ENCODE measurements at regions of chr2 and their contacts with region 1.

Region 1: DNA sequence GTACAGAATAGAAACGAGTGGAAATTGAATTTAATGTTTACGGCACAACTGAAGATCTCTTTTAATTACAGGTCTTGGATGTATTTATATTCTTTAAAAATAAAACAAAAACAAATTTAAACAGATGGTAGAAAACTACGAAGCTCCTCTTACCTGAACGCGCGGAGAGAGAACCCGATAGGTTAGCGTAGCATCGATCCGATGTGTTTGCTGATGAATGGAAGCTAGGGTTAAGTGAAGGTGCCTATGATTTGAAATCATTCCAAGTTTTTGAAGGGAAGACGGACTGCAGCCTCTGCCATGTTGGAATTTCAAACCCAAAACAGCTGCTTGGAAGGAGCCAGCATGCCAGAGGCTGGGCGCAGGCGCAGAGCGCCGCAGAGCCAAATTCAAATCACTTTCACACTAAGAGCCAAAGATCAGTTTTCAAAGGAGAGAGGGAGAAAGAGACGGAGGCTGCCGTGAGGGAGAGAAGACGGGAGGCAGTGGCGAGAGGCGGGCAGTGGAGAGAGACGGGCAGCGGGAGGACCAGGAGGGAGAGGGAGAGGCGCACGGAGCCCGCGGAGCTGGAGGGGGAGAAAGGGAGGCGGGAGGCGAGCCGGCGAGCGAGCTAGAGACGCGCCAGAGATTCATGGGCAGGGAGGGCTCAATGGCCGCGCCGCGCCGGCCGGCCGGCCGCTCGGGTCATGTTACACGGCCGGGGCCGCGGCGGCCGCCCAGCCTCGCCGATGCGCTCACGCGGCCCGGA is at the start of gene FIGN:
- DNase-seq: peak; percentile 77
- ATAC-seq: peak; percentile 83 to 95 (median 87)
- H3K4me3 ChIP-seq: peak within 1 kb of the TSS; percentile 46 to 74 (median 72)
- H3K27ac ChIP-seq: peak within 1 kb of the TSS; percentile 81 to 96 (median 94)
- H3K4me1 ChIP-seq: peaks cover 0 to 10% (median 0%) of the 10 kb centered on the region in 9 donors
- H3K27me3 ChIP-seq: peaks cover 0 to 30% (median 0%) of the 10 kb centered on the region in 7 donors
- CTCF ChIP-seq: no peak
- total RNA-seq, gene FIGN: 10.0 to 17.0 (median 12.2) TPM

Region 2: DNA sequence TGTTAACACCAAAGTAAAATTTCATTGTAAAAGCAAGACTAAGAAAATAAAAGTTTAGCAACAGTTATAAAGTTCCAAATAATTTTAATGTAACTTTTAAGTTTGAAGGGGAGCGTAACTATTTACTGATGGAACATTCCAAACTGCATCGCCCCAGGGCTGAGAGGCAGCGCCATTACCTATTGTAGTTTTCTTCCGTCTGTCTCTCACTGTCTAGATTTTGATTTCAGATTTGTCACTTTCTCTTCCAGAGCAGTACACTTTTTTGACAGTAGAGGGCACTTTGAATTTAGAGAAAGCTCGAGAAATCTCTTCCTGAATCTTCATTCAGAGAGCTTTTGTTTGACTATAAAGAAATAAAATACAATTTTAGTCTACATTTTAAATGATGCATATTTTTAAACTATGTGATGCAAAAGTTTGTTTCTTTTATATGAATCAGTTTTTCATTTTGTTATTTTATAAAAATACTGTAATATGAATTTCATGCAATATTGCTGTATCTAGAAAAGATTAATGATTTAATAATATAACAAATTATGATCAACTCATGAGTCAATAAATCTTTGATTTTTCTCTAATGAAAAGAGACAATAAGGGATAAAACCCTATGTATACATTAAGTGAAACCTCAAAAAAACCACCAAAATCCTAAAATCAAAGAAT is 389.8 kb before region 1 on chr2:
- intact Hi-C with region 1: loop called in 6 of 10 experiments (anchors 2 to 10 kb)
- DNase-seq: peak in 1 of 2 donors; percentile 5
- ATAC-seq: no peak
- H3K4me3 ChIP-seq: no peak overlapping the region
- H3K27ac ChIP-seq: no peak overlapping the region
- H3K4me1 ChIP-seq: peaks cover 0 to 26% (median 9%) of the 10 kb centered on the region in 9 donors
- H3K27me3 ChIP-seq: no peaks in the 10 kb centered on the region
- CTCF ChIP-seq: peak; percentile 58 to 87 (median 81)

Region 3: GRCh38 chr2:163471947-163472346 is 263.9 kb before region 1 on chr2:
- intact Hi-C with region 1: loop called in 6 of 10 experiments (anchors 5 to 10 kb)
- DNase-seq: peak in 1 of 2 donors; percentile 13
- ATAC-seq: peak in 6 of 8 donors; percentile 44 to 75 (median 64)
- H3K4me3 ChIP-seq: no peak overlapping the region
- H3K27ac ChIP-seq: no peak overlapping the region
- H3K4me1 ChIP-seq: peaks cover 0 to 10% (median 0%) of the 10 kb centered on the region in 9 donors
- H3K27me3 ChIP-seq: no peaks in the 10 kb centered on the region
- CTCF ChIP-seq: peak in 8 of 9 donors; percentile 16 to 61 (median 46)

Region 4: DNA sequence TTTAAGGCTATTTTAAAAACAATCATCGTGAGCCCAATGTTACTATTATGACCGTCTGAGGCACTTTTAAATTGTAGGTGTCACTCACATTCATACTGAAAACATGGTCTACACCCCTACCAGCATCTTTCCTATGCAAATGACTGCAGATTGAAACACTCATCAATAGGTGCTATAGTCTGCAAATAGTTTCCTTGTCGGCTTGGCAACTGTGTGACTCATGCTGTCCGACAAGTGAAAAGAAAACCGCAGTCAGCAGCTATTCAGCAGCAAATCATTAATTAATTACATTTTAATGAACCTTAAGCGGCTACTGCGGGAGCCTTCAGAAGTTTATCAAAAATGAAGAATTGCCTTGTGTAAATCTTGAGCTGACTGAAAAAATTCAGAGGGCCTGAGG is 134.5 kb before region 1 on chr2:
- intact Hi-C with region 1: loop called in 1 of 10 experiments (anchors 5 kb)
- DNase-seq: no peak
- ATAC-seq: no peak
- H3K4me3 ChIP-seq: no peak overlapping the region
- H3K27ac ChIP-seq: no peak overlapping the region
- H3K4me1 ChIP-seq: peaks cover 0 to 28% (median 15%) of the 10 kb centered on the region in 9 donors
- H3K27me3 ChIP-seq: no peaks in the 10 kb centered on the region
- CTCF ChIP-seq: no peak

Region 5: GRCh38 chr2:163692611-163693482 is 43.0 kb before region 1 on chr2:
- intact Hi-C with region 1: loop called in 1 of 10 experiments (anchors 5 kb)
- DNase-seq: no peak
- ATAC-seq: peak in 3 of 8 donors; percentile 38 to 43 (median 39)
- H3K4me3 ChIP-seq: no peak overlapping the region
- H3K27ac ChIP-seq: peak overlapping the region in 6 of 10 donors; percentile 3 to 47 (median 38)
- H3K4me1 ChIP-seq: peaks cover 3 to 50% (median 23%) of the 10 kb centered on the region in 9 donors
- H3K27me3 ChIP-seq: no peaks in the 10 kb centered on the region
- CTCF ChIP-seq: no peak

Region 6: DNA sequence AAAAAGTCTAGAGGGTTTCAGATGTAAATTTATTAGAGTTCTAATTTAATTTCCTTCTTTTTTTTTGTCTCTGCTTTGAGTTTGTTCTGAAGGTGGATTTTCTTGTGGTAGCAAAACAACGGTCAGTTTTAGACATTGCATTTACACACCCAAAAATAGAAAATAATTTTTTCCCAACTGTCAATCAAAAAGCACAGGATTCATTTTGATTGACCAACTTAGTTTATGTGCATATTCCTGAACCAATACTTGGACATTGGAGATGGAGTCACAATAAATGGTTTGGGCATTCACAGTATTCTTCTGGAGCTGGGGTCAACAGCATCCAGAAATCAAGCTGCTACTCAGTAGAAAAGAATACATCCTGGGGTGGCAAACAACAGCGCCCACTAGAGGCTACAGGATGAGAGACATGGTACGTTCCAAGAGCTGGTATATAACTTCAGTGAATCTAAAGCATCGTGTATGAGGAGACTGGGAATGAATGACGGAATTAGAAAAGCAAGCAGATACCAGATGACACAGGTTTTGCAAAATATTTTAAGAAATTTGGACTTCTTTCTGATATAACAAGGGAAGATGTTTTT is 142.8 kb after region 1 on chr2:
- intact Hi-C with region 1: loop called in 1 of 10 experiments (anchors 5 kb)
- DNase-seq: no peak
- ATAC-seq: no peak
- H3K4me3 ChIP-seq: no peak overlapping the region
- H3K27ac ChIP-seq: no peak overlapping the region
- H3K4me1 ChIP-seq: peaks cover 0 to 9% (median 0%) of the 10 kb centered on the region in 9 donors
- H3K27me3 ChIP-seq: no peaks in the 10 kb centered on the region
- CTCF ChIP-seq: peak in 7 of 9 donors; percentile 25 to 47 (median 32)

Region 7: GRCh38 chr2:164061129-164061746 is 325.4 kb after region 1 on chr2:
- intact Hi-C with region 1: loop called in 6 of 10 experiments (anchors 5 to 10 kb)
- DNase-seq: no peak
- ATAC-seq: no peak
- H3K4me3 ChIP-seq: no peak overlapping the region
- H3K27ac ChIP-seq: no peak overlapping the region
- H3K4me1 ChIP-seq: no peaks in the 10 kb centered on the region
- H3K27me3 ChIP-seq: no peaks in the 10 kb centered on the region
- CTCF ChIP-seq: peak; percentile 28 to 72 (median 61)